ENCODE measurements at regions of chr2 and their contacts with region 1.

Region 1: GRCh38 chr2:29238497-29238896 is 123.3 kb downstream of the CLIP4 start:
- DNase-seq: peak in 4 of 7 donors; percentile 33 to 62 (median 42)
- H3K4me3 ChIP-seq: no peak overlapping the region
- H3K27ac ChIP-seq: no peak overlapping the region
- H3K4me1 ChIP-seq: no peaks in the 10 kb centered on the region
- H3K27me3 ChIP-seq: no peaks in the 10 kb centered on the region
- CTCF ChIP-seq: peak; percentile 32 to 52 (median 44)
- POLR2A ChIP-seq: no peak

Region 2: DNA sequence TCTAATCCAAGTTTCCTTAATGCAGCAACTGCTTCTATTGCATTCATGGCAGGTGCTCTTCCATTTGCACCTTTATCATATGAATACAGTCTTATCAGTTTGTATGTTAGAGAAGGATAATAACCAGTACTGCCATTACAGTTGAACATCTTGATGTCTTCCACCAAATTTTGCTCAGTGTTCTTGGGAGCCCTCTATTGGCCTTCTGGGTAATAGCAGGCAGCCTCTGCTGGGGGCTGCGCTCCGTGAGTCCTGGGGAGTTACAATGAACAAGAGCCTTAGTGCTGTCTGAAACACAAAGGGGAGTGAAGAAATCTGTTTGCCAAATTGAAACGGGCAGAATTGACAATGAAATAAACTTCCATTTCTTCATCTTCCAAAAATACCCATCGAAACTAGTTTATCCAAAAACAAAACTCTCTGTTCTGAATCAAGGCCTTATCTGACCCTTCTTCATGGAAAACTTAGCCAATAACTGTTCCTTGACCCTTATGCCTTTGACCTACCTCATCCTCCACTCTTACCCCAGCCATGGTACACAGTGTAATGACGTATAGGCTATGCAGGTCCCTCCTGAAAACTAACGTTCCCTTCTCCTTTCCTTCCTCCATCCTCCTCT is 603.0 kb after region 1 on chr2:
- intact Hi-C with region 1: loop called in 1 of 2 experiments (anchors 10 kb)
- DNase-seq: peak in 6 of 7 donors; percentile 14 to 55 (median 22)
- H3K4me3 ChIP-seq: no peak overlapping the region
- H3K27ac ChIP-seq: no peak overlapping the region
- H3K4me1 ChIP-seq: no peaks in the 10 kb centered on the region
- H3K27me3 ChIP-seq: no peaks in the 10 kb centered on the region
- CTCF ChIP-seq: peak; percentile 68 to 85 (median 76)
- POLR2A ChIP-seq: no peak